Gastrocnemius medialis (tissue), 4 donors: ENCODE measurements at regions of chr1 and their contacts with region 1.

Region 1: GRCh38 chr1:226062558-226063223 is at the start of gene H3-3A:
- DNase-seq: peak; percentile 97 to 98
- ATAC-seq: peak; percentile 76
- H3K4me3 ChIP-seq: peak within 1 kb of the TSS; percentile 73 to 92 (median 78)
- H3K27ac ChIP-seq: peak within 1 kb of the TSS; percentile 94 to 99 (median 98)
- H3K4me1 ChIP-seq: peaks cover 31% of the 10 kb centered on the region in 2 donors
- H3K27me3 ChIP-seq: no peaks in the 10 kb centered on the region
- CTCF ChIP-seq: peak in 2 of 5 experiments; percentile 22 to 30
- POLR2A ChIP-seq: peak; percentile 97 to 99
- total RNA-seq, gene H3-3A: 163 to 289 (median 191) TPM

Region 2: DNA sequence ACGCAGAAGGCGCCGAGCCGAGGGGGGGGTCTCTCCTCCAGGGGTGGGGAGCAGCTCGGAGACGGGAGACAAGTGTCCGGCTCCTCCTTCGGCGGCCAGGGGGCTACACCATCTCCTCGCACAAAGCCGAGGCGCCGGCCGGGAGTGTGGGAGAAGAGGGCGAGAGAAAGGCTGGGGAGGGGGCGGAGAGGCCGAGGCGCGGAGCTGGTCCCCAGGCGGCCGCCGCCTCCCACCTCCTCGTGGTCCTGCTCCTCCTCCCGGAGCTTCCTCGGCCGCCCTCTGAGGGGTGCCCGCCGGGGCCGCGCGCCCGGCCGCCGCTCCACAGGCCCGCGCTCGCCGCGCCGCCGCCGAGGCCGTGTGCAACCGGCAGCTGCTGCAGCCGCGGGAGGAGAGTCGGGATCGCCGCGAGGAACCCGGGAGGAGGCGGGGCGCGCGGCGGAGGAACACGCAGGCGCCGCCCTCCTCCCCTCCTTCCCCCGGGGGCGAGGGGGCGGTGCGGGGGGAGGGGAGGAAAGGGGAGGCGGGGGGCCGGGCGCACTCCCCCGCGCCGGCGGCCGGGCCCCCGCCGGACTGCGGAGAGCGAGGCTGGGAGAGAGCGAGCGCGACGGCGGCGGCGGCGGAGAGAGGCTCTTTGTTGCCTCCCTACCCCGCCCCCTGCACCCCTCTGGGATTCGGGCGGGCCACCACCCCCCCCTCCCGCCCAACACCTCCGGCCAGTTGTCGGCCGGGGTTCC is 409.8 kb before region 1 on chr1 and contains the start of gene ENAH:
- in situ Hi-C with region 1: no loop called
- intact Hi-C with region 1: loop called (anchors 5 kb)
- DNase-seq: peak; percentile 78 to 82
- ATAC-seq: peak; percentile 54 to 65
- H3K4me3 ChIP-seq: peak within 1 kb of the TSS; percentile 66 to 92 (median 84)
- H3K27ac ChIP-seq: peak within 1 kb of the TSS; percentile 97 to 98 (median 98)
- H3K4me1 ChIP-seq: peaks cover 38 to 56% of the 10 kb centered on the region in 2 donors
- H3K27me3 ChIP-seq: no peaks in the 10 kb centered on the region
- CTCF ChIP-seq: peak in 1 of 5 experiments; percentile 10
- POLR2A ChIP-seq: peak; percentile 97 to 98
- total RNA-seq, gene ENAH: 56.1 to 112 (median 62.2) TPM

Region 3: DNA sequence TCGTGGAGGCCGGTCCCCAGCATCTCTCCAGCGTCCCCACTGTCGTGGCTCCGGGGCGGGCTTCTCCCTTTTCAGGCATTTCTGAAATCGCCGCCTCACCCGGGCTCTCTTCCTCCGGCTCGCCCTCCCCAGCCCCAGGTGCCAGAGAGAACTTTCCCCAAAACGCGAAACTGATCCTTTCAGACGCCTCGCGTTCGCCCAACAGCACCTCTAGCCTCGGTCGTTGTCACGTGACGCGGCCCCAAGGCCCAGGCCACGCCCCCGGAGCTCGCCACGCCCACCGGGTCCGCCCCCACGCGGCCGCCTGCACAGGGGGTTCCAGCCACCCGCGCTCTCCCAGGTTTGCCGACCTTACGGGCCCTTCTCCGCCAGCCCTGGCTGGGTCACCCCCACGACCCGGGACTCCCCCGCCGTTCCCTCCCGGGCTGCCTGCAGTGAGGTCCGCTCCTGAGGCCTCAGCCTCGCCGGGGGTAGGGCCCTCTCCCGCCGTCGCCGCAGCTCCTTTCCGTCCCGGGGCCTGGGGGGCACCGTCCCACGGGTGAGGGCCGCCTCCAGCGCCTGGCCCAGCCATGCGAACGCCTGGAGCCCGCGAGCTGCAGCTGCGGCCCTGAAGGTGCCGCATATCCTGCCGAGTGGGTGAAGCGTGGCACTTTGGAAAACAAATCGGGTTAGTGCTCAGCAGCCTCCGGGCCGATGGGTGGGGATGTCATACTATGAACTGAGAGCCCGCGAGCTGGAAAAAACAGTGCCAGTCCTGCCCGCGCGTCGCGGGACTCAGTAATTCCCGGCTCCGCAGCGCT is 20.8 kb after region 1 on chr1:
- in situ Hi-C with region 1: no loop called
- intact Hi-C with region 1: loop called (anchors 2 kb)
- DNase-seq: peak; percentile 77 to 83
- ATAC-seq: peak; percentile 94 to 95
- H3K4me3 ChIP-seq: peak overlapping the region; percentile 66 to 84 (median 74)
- H3K27ac ChIP-seq: peak overlapping the region; percentile 43 to 79 (median 66)
- H3K4me1 ChIP-seq: peaks cover 0 to 12% of the 10 kb centered on the region in 2 donors
- H3K27me3 ChIP-seq: no peaks in the 10 kb centered on the region
- CTCF ChIP-seq: peak in 2 of 5 experiments; percentile 19 to 29
- POLR2A ChIP-seq: peak; percentile 36 to 43

Region 4: DNA sequence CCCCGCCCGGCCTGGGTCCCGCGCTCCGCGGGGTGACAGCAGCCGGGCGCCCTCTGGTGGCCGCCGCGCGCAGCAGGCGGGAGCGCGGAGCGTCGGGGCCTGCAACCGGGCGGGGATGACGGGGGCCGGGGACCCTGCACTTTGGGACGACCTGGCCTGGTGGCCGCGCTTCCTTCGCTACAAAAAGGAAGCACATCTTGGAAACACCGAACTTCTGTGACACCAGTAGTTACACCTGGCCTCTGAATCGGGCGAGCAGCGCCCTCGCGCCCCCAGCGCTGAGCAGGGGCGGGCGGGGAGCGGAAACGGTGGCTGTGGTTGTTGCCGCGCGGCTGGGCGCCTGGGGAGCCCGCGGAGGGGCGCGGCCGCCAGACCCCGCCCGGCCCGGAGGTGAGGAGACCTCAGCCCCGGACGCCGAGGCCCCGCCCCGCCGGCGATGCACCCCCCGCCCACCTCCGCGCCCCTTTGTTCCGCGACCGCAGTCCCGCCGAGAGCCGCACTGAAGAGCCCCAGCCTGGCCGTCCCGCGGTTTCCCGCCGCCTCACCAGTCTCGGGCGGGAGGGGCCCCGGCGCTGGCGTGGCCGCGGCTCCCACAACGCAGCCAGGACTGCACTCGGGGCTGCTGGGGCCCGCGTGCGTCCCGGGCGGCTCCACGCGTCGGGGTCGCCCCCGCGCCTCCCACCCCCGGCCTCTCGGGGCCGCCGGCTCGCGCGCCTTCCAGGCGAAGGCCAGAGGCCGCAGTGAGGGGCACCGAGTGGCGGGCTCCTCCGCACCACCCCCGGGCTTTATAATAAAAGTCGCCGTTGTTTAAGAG is 59.1 kb after region 1 on chr1:
- in situ Hi-C with region 1: loop called in 2 of 4 experiments (anchors 5 to 10 kb)
- intact Hi-C with region 1: loop called (anchors 1 kb)
- DNase-seq: peak in 1 of 2 donors; percentile 31
- ATAC-seq: peak; percentile 86 to 88
- H3K4me3 ChIP-seq: peak overlapping the region; percentile 58 to 79 (median 69)
- H3K27ac ChIP-seq: peak overlapping the region; percentile 32 to 66 (median 56)
- H3K4me1 ChIP-seq: no peaks in the 10 kb centered on the region
- H3K27me3 ChIP-seq: no peaks in the 10 kb centered on the region
- CTCF ChIP-seq: peak; percentile 60 to 98 (median 97)
- POLR2A ChIP-seq: no peak

Region 5: DNA sequence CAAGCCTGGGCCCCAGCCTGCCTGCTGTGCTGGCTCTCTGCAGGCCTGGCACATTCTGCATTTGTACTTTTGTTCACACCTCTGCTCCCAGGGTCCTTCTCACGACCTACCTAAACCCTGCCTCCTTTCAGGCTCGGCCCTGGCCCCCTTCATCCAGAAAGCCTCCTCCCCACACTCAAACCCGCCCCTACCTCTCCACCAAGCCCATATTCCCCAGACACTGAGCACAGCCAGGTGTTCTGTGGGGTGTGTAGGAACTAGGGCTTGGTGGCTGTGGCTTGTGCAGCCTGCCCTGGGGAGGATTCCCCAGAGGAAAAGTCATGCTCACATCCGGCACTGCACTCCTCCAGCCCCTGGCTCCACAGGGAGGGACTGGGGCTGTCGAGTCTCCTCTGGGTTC is 152.5 kb after region 1 on chr1:
- in situ Hi-C with region 1: no loop called
- intact Hi-C with region 1: no loop called
- DNase-seq: no peak
- ATAC-seq: no peak
- H3K4me3 ChIP-seq: no peak overlapping the region
- H3K27ac ChIP-seq: no peak overlapping the region
- H3K4me1 ChIP-seq: no peaks in the 10 kb centered on the region
- H3K27me3 ChIP-seq: no peaks in the 10 kb centered on the region
- CTCF ChIP-seq: no peak
- POLR2A ChIP-seq: no peak

Region 6: GRCh38 chr1:226541631-226542622 is 479.2 kb after region 1 on chr1:
- in situ Hi-C with region 1: no loop called
- intact Hi-C with region 1: no loop called
- DNase-seq: peak in 1 of 2 donors; percentile 43
- ATAC-seq: peak in 1 of 2 donors; percentile 30
- H3K4me3 ChIP-seq: peak overlapping the region; percentile 7 to 42 (median 36)
- H3K27ac ChIP-seq: peak overlapping the region; percentile 56 to 68 (median 64)
- H3K4me1 ChIP-seq: peaks cover 5 to 20% of the 10 kb centered on the region in 2 donors
- H3K27me3 ChIP-seq: no peaks in the 10 kb centered on the region
- CTCF ChIP-seq: no peak
- POLR2A ChIP-seq: no peak